Lower lobe of right lung (tissue), 2 donors: ENCODE measurements at regions of chr16 and their contacts with region 1.

Region 1: DNA sequence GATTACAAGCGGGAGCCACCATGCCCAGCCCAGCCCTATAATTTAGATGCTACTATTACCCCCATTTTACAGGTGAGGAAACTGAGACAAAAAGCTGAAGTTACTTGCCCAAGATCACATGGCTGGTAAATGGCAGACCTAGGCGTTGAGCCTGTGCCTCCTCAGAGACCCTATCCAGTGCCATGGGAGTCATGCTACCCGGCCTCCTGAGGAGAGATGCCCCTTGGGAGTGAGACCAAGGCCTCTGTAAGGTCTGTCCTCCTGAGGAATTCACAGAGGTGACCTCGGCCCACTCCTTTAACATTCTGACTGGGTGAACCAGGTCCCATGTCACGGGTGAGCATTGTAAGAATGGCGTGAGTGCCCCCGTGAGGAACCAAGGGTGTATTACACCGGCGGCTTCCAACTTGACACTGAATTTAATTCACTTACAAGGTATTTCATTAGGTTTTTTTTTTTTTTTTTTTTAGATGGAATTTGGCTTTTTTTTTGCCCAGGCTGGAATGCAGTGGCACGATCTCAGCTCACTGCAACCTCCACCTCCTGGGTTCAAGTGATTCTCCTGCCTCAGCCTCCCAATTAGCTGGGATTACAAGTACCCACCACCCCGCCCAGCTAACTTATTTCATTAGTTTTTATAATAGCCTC is 95.7 kb downstream of the ABCC6 start:
- DNase-seq: peak; percentile 66
- ATAC-seq: peak; percentile 85 to 89
- H3K4me3 ChIP-seq: no peak overlapping the region
- H3K27ac ChIP-seq: no peak overlapping the region
- H3K4me1 ChIP-seq: no peaks in the 10 kb centered on the region
- H3K27me3 ChIP-seq: no peaks in the 10 kb centered on the region
- CTCF ChIP-seq: peak; percentile 86

Region 2: GRCh38 chr16:15874745-15875314 is 252.8 kb before region 1 on chr16:
- intact Hi-C with region 1: loop called (anchors 10 kb)
- DNase-seq: no peak
- ATAC-seq: peak; percentile 62 to 78
- H3K4me3 ChIP-seq: no peak overlapping the region
- H3K27ac ChIP-seq: no peak overlapping the region
- H3K4me1 ChIP-seq: peaks cover 8% of the 10 kb centered on the region
- H3K27me3 ChIP-seq: no peaks in the 10 kb centered on the region
- CTCF ChIP-seq: peak; percentile 70

Region 3: DNA sequence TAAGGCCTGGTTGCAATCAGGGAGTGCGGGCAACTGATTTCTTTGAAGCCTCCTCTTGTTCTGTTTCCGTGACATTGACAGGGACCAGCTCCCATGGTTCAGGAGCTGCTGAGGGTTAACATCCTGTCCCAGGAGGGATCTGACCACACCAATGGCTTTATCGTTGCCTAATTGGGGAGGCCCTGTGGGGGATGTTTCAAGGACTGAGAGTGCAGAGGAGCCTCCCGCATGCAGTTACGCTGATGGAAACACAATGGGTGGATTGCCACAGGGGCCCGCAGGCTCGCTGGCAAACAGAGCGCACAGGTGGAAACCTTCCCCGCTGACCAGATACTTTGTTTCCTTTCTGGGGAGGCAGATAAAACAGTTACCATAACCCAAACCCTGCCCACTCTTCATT is 202.0 kb before region 1 on chr16:
- intact Hi-C with region 1: no loop called
- DNase-seq: no peak
- ATAC-seq: no peak
- H3K4me3 ChIP-seq: no peak overlapping the region
- H3K27ac ChIP-seq: no peak overlapping the region
- H3K4me1 ChIP-seq: no peaks in the 10 kb centered on the region
- H3K27me3 ChIP-seq: no peaks in the 10 kb centered on the region
- CTCF ChIP-seq: no peak